ENCODE measurements at regions of chr3 and their contacts with region 1.

Region 1: GRCh38 chr3:99172736-99173657 is 271.5 kb upstream of the DCBLD2 start:
- DNase-seq: no peak
- H3K4me3 Mint-ChIP-seq: no peak overlapping the region
- H3K27ac Mint-ChIP-seq: no peak overlapping the region
- H3K4me1 Mint-ChIP-seq: no peaks in the 10 kb centered on the region
- H3K27me3 Mint-ChIP-seq: no peaks in the 10 kb centered on the region

Region 2: DNA sequence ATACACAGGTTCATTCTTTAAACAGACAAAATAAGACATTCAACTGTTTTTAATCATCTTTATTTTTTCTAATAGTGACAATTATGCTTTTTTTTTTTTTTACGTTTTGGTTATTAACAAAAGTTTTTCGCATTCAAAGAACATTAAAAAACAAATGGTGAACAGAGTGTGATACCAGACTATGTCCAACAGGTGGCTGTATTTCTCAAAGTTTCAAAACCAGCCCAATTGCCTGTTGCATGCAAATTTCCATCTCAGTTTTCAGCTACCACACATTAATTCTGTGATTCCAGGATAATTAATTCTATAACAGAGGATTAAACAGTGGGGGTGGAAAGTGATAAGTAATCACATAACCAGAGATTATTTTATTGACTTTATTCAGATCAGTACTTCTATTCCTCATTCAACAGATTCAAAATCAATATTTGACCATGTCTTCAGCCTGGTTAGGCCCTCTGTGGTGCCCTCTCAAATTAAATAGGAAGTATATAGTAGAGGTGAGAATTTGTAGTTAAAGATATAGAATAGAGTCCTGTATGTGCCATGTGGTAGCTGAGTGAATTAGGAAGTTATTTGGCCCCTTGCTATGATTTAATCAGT is 149.3 kb before region 1 on chr3:
- intact Hi-C with region 1: loop called (anchors 5 kb)
- DNase-seq: no peak
- H3K4me3 Mint-ChIP-seq: no peak overlapping the region
- H3K27ac Mint-ChIP-seq: no peak overlapping the region
- H3K4me1 Mint-ChIP-seq: no peaks in the 10 kb centered on the region
- H3K27me3 Mint-ChIP-seq: no peaks in the 10 kb centered on the region

Region 3: GRCh38 chr3:99213019-99213418 is 40.0 kb after region 1 on chr3:
- intact Hi-C with region 1: no loop called
- DNase-seq: no peak
- H3K4me3 Mint-ChIP-seq: no peak overlapping the region
- H3K27ac Mint-ChIP-seq: no peak overlapping the region
- H3K4me1 Mint-ChIP-seq: no peaks in the 10 kb centered on the region
- H3K27me3 Mint-ChIP-seq: no peaks in the 10 kb centered on the region